ENCODE measurements at regions of chr19 and their contacts with region 1.

Region 1: DNA sequence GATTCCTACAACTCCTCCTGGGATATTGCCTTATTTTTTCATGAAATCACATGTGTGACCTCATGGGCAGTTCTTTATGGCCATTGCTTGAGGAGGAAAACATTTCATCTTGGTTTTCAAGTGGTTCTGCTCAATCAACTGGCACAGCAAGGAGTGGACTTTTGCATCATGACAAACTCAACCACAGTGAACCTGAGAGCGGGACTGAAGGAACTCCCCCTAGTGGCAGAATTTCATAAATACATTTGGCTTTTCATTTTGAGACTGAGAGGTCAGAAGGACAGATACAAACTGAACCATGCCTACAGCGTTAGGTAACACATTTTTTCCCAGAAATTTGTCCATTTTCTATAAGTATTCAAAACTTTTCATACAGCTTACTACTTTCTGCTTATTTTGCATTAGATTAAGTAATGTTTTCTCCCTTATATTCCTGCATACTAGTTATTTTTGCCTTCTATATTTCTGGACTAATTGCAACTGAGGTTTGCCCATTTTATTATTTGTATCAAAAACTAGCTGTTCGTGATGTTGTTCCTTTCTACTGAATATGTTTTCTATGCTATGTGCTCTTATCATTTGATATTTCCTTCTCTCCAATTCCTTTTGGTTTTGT is 13.4 kb upstream of the SIGLEC12 start:
- DNase-seq: peak; percentile 41
- ATAC-seq: peak; percentile 73
- H3K4me3 Mint-ChIP-seq: no peak overlapping the region
- H3K27ac Mint-ChIP-seq: no peak overlapping the region
- H3K4me1 Mint-ChIP-seq: peaks cover 19% of the 10 kb centered on the region
- H3K27me3 Mint-ChIP-seq: peaks cover 17% of the 10 kb centered on the region

Region 2: GRCh38 chr19:51422053-51422448 is 92.9 kb before region 1 on chr19:
- CTCF ChIA-PET with region 1: interaction called, 9 read pairs
- POLR2A ChIA-PET with region 1: interaction called, 3 read pairs
- intact Hi-C with region 1: loop called (anchors 1 kb)
- DNase-seq: peak; percentile 94
- ATAC-seq: peak; percentile 60
- H3K4me3 Mint-ChIP-seq: no peak overlapping the region
- H3K27ac Mint-ChIP-seq: no peak overlapping the region
- H3K4me1 Mint-ChIP-seq: peaks cover 24% of the 10 kb centered on the region
- H3K27me3 Mint-ChIP-seq: peaks cover 20% of the 10 kb centered on the region

Region 3: GRCh38 chr19:51501594-51502263 is 13.2 kb before region 1 on chr19 and contains the start of gene SIGLEC12:
- CTCF ChIA-PET with region 1: interaction called, 27 read pairs
- POLR2A ChIA-PET with region 1: no interaction called
- intact Hi-C with region 1: no loop called
- DNase-seq: peak; percentile 56
- ATAC-seq: peak; percentile 75
- H3K4me3 Mint-ChIP-seq: peak within 1 kb of the TSS; percentile 44
- H3K27ac Mint-ChIP-seq: peak within 1 kb of the TSS; percentile 61
- H3K4me1 Mint-ChIP-seq: peaks cover 11% of the 10 kb centered on the region
- H3K27me3 Mint-ChIP-seq: peaks cover 2% of the 10 kb centered on the region
- total RNA-seq, gene SIGLEC12: 1.2 to 1.9 TPM

Region 4: DNA sequence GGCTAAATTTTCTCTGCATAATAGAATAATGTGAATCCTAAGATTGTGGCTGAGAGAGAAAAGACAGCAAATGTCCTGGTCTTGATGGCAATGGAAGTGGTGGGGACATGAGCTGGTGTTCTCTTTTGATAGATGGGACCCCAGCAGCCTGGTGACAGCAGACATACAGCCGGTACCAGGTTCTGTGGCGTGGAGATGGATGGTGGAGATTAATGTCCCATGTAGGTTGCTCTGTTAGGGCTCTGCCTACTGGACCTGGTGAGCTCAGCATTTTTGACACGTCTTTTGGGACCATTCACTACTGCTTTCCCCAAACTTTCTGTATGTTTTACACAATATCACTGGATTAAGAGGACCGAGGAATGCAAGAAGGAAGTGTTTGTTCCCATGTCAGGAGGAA is 139.8 kb after region 1 on chr19:
- CTCF ChIA-PET with region 1: interaction called, 28 read pairs
- POLR2A ChIA-PET with region 1: no interaction called
- intact Hi-C with region 1: loop called (anchors 2 to 5 kb)
- DNase-seq: no peak
- ATAC-seq: no peak
- H3K4me3 Mint-ChIP-seq: no peak overlapping the region
- H3K27ac Mint-ChIP-seq: no peak overlapping the region
- H3K4me1 Mint-ChIP-seq: peaks cover 5% of the 10 kb centered on the region
- H3K27me3 Mint-ChIP-seq: peaks cover 26% of the 10 kb centered on the region

Measured in activated CD4-positive, alpha-beta T cell treated with anti-CD3 and anti-CD28 coated beads for 36 hours (primary cell).